PC-3 (cell line): ENCODE measurements at regions of chr6 and their contacts with region 1.

Region 1: GRCh38 chr6:104771258-104771832 is 88.4 kb downstream of the HACE1 start:
- DNase-seq: peak; percentile 45
- ATAC-seq: peak; percentile 64
- H3K4me3 ChIP-seq: no peak overlapping the region
- H3K27ac ChIP-seq: no peak overlapping the region
- H3K4me1 ChIP-seq: no peaks in the 10 kb centered on the region
- H3K27me3 ChIP-seq: no peaks in the 10 kb centered on the region
- CTCF ChIP-seq: peak; percentile 71

Region 2: DNA sequence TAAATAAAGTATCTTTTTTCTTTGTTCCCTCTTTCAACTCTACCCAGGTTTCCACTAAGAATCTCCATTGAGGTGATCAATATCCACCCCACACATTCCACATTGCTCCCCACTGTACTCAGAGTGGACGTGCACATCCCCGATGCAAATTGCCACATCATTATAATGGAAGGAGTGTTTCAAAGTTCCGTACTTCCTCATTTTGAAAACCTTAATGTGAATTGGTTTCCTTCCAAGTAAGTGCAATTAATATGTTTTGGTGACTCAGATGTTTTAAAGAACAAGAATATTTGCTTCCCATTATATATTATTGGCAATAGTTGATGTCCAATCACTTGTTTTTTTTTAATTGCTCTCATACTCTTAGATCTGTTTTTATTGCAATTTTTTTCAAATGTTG is 375.3 kb before region 1 on chr6:
- CTCF ChIA-PET with region 1: no interaction called
- POLR2A ChIA-PET with region 1: no interaction called
- intact Hi-C with region 1: no loop called
- DNase-seq: peak; percentile 62
- ATAC-seq: peak; percentile 53
- H3K4me3 ChIP-seq: no peak overlapping the region
- H3K27ac ChIP-seq: 0 out of 2 replicates have a peak overlapping the region, but pooled peaks have one; percentile 3
- H3K4me1 ChIP-seq: peaks cover 11% of the 10 kb centered on the region; the same call in 1 of the 2 replicates
- H3K27me3 ChIP-seq: no peaks in the 10 kb centered on the region
- CTCF ChIP-seq: no peak

Region 3: DNA sequence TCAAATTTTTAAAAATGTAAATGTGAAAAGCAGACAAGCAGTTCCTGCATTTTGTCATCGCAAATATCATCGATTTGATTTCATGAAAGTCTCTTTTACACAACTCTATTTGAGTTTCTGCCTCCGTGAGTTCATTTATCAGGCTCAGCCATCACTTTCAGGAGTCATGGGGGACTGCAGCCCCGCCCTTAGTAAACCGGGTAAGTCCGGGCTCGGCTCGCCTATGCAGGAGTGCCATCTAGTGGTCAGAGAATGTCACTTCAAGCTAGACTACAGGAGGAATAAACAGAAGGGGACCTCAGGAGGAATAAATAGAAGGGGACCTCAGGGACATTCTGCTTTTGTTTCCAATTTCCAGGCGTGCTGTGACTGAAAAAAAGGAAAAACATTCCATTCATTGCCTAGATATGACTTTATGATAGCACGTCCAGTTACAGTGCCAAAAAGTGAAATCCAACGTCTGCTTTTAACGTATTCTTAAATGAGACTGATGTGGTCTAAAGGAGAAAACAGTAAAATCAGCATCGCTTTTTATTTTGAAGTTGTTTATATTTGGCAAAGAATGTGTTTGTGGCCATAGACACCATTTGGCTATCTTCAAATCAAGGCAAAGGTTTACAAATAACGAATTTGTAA is 245.6 kb before region 1 on chr6:
- CTCF ChIA-PET with region 1: no interaction called
- POLR2A ChIA-PET with region 1: no interaction called
- intact Hi-C with region 1: loop called (anchors 2 kb)
- DNase-seq: peak; percentile 80
- ATAC-seq: peak; percentile 86
- H3K4me3 ChIP-seq: peak overlapping the region; percentile 60
- H3K27ac ChIP-seq: no peak overlapping the region
- H3K4me1 ChIP-seq: no peaks in the 10 kb centered on the region
- H3K27me3 ChIP-seq: no peaks in the 10 kb centered on the region
- CTCF ChIP-seq: peak; percentile 87

Region 4: DNA sequence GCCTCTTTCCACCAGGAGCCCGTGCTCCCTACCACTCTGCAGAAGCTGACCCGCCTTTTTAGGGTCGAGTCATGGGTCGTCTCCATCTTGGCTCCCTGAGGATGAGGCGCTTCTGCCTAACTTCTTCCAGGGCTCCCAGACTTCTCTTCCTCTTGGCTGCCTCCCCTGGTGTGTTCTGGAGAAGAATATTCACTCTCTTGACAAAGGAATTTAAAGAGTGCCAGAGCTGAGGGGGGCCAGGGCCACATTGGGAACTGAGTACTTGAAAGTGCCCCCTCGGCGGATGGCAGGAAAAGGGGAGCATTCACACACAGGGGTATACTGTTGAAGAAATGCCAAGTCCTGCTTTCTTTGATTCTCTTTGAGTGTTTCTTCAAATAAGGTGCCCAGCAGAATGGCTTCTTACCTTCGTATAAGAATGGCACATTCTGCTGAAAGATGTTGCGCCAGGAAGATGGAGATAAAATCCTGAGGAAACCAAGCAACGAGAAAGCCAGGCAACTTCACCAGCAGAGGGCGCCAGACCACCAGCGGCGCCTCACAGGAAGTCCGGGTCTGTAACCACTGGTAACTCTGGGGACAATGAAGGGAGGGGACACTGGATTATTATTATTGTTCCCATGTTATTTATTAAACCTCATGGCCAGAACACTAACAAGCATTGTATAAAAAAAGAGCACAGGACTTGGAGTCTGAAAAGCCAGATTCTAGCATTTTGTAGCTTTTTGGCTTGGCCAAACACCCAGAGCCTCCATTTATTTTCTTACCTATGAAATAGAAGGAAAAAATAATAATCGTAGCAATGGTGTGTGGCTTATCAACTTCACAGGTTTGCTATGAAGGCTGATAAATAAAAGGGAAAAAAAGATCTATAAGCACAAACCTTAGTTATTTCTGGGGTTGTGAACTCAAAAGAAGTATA is 88.4 kb before region 1 on chr6:
- CTCF ChIA-PET with region 1: interaction called, 3 read pairs
- POLR2A ChIA-PET with region 1: no interaction called
- intact Hi-C with region 1: loop called (anchors 1 kb)
- DNase-seq: peak; percentile 72
- ATAC-seq: peak; percentile 67
- H3K4me3 ChIP-seq: no peak overlapping the region
- H3K27ac ChIP-seq: no peak overlapping the region
- H3K4me1 ChIP-seq: 0 out of 2 replicates have a peak, but pooled peaks cover 3% of the 10 kb centered on the region
- H3K27me3 ChIP-seq: no peaks in the 10 kb centered on the region
- CTCF ChIP-seq: peak; percentile 91

Region 5: DNA sequence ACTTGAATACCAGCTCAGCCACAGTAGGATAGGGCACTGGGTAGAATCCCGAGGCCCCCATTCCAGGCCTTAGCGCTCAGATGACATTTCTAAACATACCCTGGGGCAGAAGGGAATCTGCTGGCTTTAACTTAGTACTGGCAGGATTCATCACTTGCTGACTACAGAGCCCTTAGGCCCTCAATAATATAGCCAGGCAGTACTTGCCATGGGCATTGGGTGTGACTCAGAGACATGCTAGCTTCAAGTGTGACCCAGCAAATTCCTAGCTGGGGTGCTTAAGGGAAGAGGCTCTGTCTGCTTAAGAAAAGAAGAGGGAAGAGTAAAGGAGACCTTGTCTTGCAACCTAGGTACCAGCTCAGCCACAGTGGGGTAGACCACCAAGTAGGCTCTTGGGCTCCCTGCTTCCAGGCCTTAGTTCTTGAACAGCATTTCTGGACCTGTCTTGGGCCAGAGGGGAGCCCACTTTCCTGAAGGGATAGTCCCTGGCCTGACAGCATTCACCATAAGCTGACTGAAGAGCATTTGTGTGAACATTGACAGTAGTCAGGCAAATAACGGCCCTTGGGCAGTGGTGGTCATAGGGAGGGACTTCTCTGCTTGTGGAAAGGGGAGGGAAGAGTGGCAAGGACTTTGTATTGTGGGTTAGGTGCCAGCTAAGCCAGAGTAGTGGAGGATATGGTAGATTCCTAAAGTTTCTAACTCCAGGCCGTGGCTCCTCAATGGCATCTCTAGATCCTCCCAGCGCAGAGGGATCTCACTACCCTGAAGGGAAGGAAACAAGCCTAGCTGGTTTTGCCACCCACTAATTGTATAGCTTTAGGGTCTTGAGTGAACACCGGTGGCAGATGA is 136.9 kb after region 1 on chr6:
- CTCF ChIA-PET with region 1: no interaction called
- POLR2A ChIA-PET with region 1: no interaction called
- intact Hi-C with region 1: no loop called
- DNase-seq: peak; percentile 13
- ATAC-seq: no peak
- H3K4me3 ChIP-seq: no peak overlapping the region
- H3K27ac ChIP-seq: no peak overlapping the region
- H3K4me1 ChIP-seq: no peaks in the 10 kb centered on the region
- H3K27me3 ChIP-seq: no peaks in the 10 kb centered on the region
- CTCF ChIP-seq: no peak